AG04450 (cell line): ENCODE measurements at regions of chr12 and their contacts with region 1.

Region 1: DNA sequence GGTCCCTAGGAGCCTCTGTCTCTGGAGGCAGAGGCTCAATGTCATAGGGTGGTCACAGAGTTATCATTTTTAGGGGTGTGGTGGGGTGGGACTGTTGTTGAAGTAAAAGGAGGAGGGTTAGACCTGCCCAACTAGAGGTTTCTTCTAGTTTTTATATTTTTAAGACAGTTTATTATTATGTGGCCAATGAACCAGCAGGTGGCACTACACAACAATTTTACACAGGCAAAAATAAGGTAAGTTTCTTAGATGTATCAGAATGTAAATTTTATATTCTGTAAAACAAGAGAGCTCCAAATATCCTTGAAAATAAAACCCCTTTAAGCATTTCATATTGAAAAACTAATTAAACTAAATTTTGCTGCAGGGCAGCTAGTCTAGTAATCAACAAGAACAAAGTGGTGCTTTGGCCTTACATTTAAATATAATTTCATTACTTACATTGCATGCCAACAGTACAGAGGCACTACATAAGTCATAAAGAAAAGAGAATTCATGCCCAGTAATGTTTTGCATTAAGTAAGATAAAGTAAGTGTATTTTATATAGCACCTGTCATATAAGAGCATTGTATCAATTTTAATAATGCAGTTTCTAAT is 22.2 kb upstream of the OVCH1 start:
- DNase-seq: peak; percentile 36
- H3K4me3 ChIP-seq: no peak overlapping the region
- H3K27ac ChIP-seq: no peak overlapping the region
- H3K27me3 ChIP-seq: no peaks in the 10 kb centered on the region
- CTCF ChIP-seq: peak; percentile 64

Region 2: GRCh38 chr12:29499235-29499634 is 20.4 kb before region 1 on chr12:
- CTCF ChIA-PET with region 1: no interaction called
- POLR2A ChIA-PET with region 1: no interaction called
- DNase-seq: no peak
- H3K4me3 ChIP-seq: no peak overlapping the region
- H3K27ac ChIP-seq: no peak overlapping the region
- H3K27me3 ChIP-seq: no peaks in the 10 kb centered on the region
- CTCF ChIP-seq: no peak

Region 3: GRCh38 chr12:29534935-29535334 is 15.3 kb after region 1 on chr12:
- CTCF ChIA-PET with region 1: interaction called, 38 read pairs
- POLR2A ChIA-PET with region 1: no interaction called
- DNase-seq: no peak
- H3K4me3 ChIP-seq: no peak overlapping the region
- H3K27ac ChIP-seq: no peak overlapping the region
- H3K27me3 ChIP-seq: no peaks in the 10 kb centered on the region
- CTCF ChIP-seq: no peak

Region 4: GRCh38 chr12:30286345-30286926 is 766.8 kb after region 1 on chr12:
- CTCF ChIA-PET with region 1: interaction called, 14 read pairs
- POLR2A ChIA-PET with region 1: no interaction called
- DNase-seq: no peak
- H3K4me3 ChIP-seq: no peak overlapping the region
- H3K27ac ChIP-seq: no peak overlapping the region
- H3K27me3 ChIP-seq: no peaks in the 10 kb centered on the region
- CTCF ChIP-seq: peak; percentile 73

Region 5: DNA sequence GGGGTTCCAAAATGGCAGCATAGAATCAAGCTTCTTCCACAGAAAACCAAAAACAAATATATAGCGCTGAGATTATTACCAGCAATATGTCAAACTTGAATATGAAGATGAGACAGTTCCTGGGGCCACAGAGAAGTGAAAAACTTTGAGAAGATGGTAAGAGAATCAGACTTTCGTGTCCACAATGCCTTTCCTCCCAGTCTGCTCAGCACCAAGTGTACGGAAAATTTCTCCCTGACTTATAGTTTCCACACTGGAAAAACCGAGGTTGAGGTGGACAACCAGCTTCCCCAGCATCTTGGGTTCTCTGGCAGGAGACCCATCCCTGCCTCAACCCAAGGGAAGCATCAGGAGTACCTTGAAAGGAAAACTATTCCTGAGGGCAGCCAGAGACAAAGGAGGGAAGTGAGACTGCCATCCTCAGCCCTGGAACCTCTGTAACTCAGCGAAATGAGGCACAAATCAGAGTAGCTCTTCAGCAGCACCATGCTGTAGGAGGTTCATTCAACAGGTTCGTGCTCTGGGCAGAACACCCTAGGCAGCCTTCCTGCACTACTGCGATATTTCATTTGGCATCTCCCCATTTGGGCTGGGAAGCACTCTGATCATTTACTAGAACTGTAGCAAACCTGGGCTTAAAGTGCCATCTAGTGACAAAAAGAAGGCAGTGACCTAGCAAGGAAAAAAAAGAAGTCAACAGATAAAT is 1287.5 kb after region 1 on chr12:
- CTCF ChIA-PET with region 1: interaction called, 30 read pairs
- POLR2A ChIA-PET with region 1: no interaction called
- DNase-seq: no peak
- H3K4me3 ChIP-seq: no peak overlapping the region
- H3K27ac ChIP-seq: no peak overlapping the region
- H3K27me3 ChIP-seq: no peaks in the 10 kb centered on the region
- CTCF ChIP-seq: peak; percentile 80